Activated T-helper 2 cell treated with anti-CD3 and anti-CD28 coated beads, Interferon-gamma antibody, Interleukin-2, Interleukin-4, amounts not matched to agents 10 μg/mL and 5 μg/mL and 100 μg/mL, durations not matched to agents 14 hours and 24 hours and 36 hours (primary cell): ENCODE measurements at regions of chr17 and their contacts with region 1.

Region 1: DNA sequence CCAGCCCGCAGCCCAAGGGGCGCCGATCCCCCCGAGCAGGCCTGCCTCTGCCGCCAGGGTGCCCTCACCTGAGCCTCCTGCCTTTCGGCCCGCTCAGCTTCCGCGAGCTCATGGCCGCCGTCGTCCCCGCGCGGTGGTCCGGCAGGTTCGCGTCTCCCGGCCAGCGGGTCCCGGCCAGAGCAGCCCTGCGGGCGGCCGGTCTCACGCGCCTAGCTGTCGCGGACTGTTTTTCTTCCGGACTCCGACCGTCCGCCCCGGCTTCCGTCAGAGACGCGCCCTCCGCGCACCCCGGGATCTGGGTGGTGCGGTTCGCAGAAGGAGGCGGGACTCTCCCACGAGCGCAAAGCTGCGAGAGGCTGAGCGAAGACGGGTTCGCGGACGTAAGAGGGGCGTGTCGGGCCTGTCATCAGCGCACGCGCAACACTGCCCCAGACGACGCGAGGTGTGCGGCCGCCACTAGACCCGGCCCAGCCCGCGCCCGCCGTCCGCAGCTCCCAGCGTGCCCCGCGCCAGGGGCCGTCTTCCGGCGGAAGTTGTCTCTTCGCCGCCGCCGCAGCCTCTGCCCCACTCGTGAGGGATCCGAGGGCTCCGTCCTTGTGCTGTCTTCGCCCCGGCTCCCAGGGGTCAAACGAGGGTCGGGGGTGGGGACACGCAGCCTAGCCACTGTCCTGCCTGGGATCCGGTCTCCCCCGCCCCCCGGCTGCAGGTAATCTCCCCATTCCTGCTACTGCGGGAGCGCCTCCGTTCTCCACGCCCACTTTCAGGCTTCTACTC is at the start of gene INPP5K:
- DNase-seq: peak; percentile 99
- H3K4me3 Mint-ChIP-seq: peak within 1 kb of the TSS; percentile 84
- H3K27ac Mint-ChIP-seq: peak within 1 kb of the TSS; percentile 82
- H3K4me1 Mint-ChIP-seq: peaks cover 15% of the 10 kb centered on the region
- H3K27me3 Mint-ChIP-seq: no peaks in the 10 kb centered on the region
- total RNA-seq, gene INPP5K: 26.2 and 31.0 TPM in 2 replicates

Region 2: DNA sequence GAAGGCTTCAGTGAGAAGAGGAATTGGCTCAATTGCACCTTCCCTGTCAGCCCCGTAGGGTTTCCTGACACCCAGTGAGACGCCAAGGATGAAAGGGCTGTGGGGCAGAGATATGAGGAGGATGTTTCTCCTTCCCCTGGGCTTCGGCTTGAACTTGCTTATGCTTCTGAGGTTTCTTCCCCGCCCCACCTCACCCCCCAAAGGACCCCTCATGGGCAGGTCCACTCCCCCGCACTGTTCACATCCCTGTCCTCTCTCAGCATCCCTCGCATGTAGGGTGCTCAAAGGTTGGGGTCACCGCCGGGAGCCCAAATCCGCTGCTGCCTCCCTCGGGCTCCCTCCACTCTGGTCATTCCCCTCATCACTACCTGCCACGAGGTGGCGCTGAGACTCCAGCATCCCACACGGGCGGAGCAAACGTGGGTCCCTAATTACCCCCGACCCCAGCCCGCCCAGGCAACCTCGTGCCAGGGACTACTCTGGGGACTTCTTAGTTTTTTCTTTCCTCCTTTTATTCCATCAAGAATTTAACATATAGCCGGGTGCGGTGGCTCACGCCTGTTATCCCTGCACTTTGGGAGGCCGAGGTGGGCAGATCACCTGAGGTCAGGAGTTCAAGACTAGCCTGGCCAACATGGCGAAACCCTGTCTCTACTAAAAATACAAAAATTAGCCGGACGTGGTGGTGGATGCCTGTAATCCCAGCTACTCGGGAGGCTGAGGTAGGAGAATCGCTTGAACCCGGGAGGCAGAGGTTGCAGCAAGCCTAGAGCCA is 240.4 kb before region 1 on chr17:
- intact Hi-C with region 1: loop called (anchors 10 kb)
- DNase-seq: peak; percentile 60
- H3K4me3 Mint-ChIP-seq: no peak overlapping the region
- H3K27ac Mint-ChIP-seq: no peak overlapping the region
- H3K4me1 Mint-ChIP-seq: peaks cover 4% of the 10 kb centered on the region
- H3K27me3 Mint-ChIP-seq: peaks cover 33% of the 10 kb centered on the region

Region 3: DNA sequence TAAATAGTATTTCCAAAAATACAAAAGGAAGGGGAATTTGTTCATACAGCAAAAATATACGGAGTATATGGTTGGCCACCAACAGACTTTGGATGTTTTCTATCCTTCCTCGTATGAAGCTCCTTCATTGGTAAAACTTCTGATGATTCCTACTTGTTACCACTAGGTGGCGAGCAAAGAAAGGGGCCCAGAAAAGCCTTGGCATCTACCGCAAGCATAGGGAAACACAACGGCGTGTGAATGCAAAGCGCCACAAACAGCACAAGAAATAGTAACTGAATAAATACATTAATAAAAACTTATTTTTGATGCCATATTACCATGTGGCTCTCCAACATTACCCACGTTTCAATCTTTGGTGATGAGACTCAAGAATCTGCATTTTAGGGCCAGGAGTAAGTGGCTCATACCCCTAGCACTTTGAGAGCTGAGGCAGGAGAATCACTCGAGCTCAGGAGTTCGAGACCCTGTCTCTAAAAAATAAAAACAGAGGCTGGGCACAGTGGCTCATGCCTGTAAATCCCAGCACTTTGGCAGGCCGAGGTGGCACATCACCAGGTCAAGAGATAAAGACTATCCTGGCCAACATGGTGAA is 151.0 kb before region 1 on chr17:
- intact Hi-C with region 1: loop called (anchors 1 kb)
- DNase-seq: peak; percentile 47
- H3K4me3 Mint-ChIP-seq: no peak overlapping the region
- H3K27ac Mint-ChIP-seq: peak overlapping the region; percentile 7
- H3K4me1 Mint-ChIP-seq: peaks cover 38% of the 10 kb centered on the region
- H3K27me3 Mint-ChIP-seq: no peaks in the 10 kb centered on the region

Region 4: DNA sequence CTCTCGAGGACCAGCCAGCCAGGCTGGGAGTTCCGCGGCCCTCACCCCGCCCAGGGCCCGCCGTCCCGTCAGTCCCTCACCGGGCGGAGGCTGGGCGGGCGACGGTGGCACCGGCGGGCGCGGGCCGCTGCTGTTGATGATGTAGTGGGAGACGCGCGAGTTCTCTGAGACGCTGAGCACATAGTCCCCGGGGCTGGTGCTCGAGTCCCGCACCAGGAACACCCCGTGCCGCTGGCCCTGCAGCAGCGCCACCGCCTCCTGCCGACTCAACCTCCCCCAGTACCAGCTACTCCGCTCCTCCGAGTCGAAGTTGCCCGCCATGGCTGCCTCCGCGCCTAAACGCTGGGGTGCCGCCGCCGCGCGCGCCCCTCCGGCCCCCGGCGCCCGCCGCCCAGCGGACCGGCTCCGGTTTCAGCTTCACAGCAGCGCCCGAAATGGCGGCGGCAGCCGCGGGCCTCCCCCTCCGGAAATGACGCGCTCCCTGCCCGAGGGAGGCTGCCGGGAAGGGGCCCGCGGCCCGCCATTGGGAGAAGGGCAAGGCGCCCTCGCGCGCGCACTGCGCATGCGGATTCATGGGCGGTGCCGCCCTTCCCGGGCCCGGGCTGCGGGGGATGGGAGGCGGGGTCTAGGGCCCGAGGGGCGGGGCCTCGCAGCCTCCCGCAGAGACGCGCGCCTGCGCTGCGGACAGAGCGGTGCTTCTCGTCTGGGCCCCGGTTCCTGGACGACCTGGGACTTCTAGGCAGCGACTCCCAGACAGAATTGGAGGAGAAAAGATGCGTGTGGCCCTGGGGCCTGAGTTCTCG is 60.6 kb before region 1 on chr17 and contains the start of gene CRK:
- intact Hi-C with region 1: loop called (anchors 1 kb)
- DNase-seq: peak; percentile 97
- H3K4me3 Mint-ChIP-seq: peak within 1 kb of the TSS; percentile 88
- H3K27ac Mint-ChIP-seq: peak within 1 kb of the TSS; percentile 84
- H3K4me1 Mint-ChIP-seq: peaks cover 20% of the 10 kb centered on the region
- H3K27me3 Mint-ChIP-seq: peaks cover 12% of the 10 kb centered on the region
- total RNA-seq, gene CRK: 22.2 and 22.6 TPM in 2 replicates

Region 5: DNA sequence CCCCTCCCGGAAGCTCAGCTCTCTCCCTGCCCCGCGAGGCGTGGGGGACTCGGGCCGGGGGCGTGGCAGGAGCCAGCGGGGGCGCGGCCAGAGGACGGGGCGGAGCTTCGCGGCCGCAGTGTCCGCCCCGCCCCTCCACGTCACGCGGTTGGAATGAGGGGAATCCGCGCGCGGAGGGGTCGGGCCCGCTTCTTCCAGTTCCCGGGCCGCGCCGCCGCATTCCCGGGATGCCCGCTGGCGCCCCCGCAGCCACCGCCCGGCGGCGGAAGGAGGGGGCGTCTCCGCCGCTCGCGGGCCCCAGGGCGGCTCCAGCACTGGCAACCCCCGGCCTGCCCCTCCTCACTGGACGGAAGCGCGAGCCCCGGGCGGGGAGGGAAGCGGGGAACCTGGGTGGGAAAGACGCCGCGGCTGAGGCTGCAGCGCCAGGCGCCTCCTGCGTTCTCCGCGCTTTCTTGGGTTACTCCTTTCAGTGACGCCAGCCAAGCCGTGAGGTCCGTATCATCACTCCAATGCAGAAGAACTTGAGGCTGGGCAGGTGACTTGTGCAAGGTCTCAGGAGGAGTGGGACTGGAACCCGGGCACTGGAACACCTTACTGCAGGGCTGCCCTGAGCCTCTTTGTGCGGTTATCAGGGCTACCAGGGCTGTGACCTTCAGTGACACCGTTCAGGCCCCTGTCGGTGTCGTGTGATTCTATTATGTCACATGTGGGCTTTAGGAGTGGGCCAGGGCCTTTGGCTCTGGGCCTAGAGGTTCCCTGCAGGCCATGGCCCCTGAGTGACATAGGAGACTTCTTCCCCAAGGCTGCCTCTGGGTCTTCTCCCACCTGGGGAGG is 28.3 kb before region 1 on chr17:
- intact Hi-C with region 1: loop called (anchors 1 kb)
- DNase-seq: peak; percentile 54
- H3K4me3 Mint-ChIP-seq: peak overlapping the region; percentile 84
- H3K27ac Mint-ChIP-seq: no peak overlapping the region
- H3K4me1 Mint-ChIP-seq: peaks cover 23% of the 10 kb centered on the region
- H3K27me3 Mint-ChIP-seq: no peaks in the 10 kb centered on the region

Region 6: GRCh38 chr17:1498869-1499268 is 17.7 kb before region 1 on chr17:
- intact Hi-C with region 1: no loop called
- DNase-seq: no peak
- H3K4me3 Mint-ChIP-seq: no peak overlapping the region
- H3K27ac Mint-ChIP-seq: no peak overlapping the region
- H3K4me1 Mint-ChIP-seq: no peaks in the 10 kb centered on the region
- H3K27me3 Mint-ChIP-seq: no peaks in the 10 kb centered on the region

Region 7: GRCh38 chr17:1561400-1562175 is 45.0 kb after region 1 on chr17:
- intact Hi-C with region 1: loop called (anchors 1 kb)
- DNase-seq: peak; percentile 30
- H3K4me3 Mint-ChIP-seq: peak overlapping the region; percentile 79
- H3K27ac Mint-ChIP-seq: no peak overlapping the region
- H3K4me1 Mint-ChIP-seq: peaks cover 22% of the 10 kb centered on the region
- H3K27me3 Mint-ChIP-seq: no peaks in the 10 kb centered on the region